ENCODE measurements at regions of chr2 and their contacts with region 1.

Region 1: DNA sequence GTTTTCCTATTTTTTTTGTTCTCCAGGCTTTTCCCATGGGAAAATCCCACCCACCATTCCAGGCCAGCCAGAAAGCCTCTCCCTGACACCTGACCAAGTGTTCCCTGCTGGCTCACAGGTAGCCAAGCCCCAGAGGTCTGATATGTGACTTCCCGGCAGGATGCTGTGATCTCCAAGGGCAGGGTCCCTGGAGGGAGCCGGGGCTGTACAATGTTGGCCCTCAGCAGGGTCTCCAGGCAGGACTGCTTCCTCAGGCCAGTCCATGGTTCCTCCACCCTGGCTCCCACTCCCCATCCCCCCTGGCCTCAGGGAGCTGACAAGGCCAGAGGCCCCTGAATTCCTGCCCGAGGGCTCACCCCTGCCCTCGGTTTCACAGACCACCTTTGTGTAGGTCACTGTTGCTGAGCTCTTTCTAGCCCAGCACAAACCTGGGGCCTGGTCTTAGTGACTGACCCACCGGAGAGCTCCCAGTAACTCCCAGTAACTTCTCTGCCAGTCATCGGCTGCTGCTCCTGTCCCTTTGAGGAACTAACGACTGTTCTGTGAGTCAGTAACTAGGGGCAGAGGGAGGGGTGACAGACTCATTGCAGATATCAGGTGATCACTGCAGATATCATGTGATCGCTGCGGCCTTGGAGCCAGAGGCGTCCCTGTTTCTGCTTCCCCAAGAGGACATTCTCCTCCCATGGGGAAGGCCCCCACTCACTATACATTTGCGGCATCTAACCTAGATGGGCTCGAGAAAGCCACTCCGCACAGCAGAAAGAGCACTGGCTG is 38.7 kb downstream of the SDC1 start:
- DNase-seq: peak; percentile 74 to 93
- H3K4me3 ChIP-seq: peak overlapping the region; percentile 54
- H3K27ac ChIP-seq: peak overlapping the region; percentile 92
- H3K4me1 ChIP-seq: peaks cover 59% of the 10 kb centered on the region
- H3K27me3 ChIP-seq: no peaks in the 10 kb centered on the region
- CTCF ChIP-seq: no peak

Region 2: GRCh38 chr2:20106746-20107145 is 79.5 kb before region 1 on chr2:
- CTCF ChIA-PET with region 1: interaction called, 8 read pairs
- POLR2A ChIA-PET with region 1: no interaction called
- intact Hi-C with region 1: loop called (anchors 2 kb)
- DNase-seq: peak; percentile 70 to 83
- H3K4me3 ChIP-seq: peak overlapping the region; percentile 68
- H3K27ac ChIP-seq: peak overlapping the region; percentile 32; the same call in 1 of the 2 replicates
- H3K4me1 ChIP-seq: peaks cover 45% of the 10 kb centered on the region
- H3K27me3 ChIP-seq: no peaks in the 10 kb centered on the region
- CTCF ChIP-seq: peak; percentile 92

Measured in PC-9 (cell line).